GM18951 (cell line): ENCODE measurements at regions of chr19 and their contacts with region 1.

Region 1: DNA sequence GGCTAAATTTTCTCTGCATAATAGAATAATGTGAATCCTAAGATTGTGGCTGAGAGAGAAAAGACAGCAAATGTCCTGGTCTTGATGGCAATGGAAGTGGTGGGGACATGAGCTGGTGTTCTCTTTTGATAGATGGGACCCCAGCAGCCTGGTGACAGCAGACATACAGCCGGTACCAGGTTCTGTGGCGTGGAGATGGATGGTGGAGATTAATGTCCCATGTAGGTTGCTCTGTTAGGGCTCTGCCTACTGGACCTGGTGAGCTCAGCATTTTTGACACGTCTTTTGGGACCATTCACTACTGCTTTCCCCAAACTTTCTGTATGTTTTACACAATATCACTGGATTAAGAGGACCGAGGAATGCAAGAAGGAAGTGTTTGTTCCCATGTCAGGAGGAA is 8.2 kb upstream of the SIGLEC14 start:
- POLR2A ChIP-seq: no peak

Region 2: DNA sequence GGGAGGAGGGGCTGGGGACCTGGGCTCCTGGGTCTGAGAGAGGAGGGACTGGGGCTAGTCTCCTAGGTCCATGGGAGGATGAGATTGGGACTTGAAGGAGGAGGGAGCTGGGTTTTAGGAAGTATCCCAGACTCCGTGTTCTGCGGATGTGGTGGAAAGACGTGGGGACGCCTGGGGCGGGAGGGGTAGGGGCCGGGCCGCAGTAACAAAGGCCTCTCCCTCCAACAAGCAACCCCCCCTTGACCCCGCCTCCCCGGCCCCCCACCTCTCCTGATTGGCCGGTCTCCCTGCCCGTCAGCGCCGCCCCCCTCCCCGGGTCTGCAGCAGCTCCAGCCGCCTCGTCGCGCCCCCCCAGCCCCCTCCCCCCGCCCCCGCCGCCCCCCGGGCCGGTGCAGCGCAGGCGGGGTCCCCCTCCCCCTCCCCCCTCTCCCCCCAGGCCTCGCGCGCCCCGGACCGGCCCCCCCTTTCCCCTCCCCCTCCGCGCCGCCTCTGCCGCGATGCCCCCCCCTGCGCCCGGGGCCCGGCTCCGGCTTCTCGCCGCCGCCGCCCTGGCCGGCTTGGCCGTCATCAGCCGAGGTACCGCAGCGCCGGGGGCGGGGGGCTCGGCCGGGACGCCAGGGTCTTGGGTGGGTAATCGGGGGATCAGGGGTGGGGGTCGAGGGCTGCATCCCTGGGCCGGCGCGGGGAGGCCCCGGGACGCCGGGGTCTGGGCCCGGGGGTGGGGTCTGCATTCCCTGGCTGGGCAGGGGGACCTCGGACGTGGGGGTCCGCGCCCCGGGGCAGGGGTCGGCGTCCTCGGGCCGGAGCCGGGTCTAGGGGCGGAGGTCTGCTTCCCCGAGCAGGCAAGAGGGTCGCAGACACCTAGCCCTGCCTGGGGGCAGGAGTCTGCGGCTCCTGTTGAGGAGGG is 343.2 kb before region 1 on chr19 and contains the start of gene IGLON5:
- in situ Hi-C with region 1: no loop called
- POLR2A ChIP-seq: no peak

Region 3: DNA sequence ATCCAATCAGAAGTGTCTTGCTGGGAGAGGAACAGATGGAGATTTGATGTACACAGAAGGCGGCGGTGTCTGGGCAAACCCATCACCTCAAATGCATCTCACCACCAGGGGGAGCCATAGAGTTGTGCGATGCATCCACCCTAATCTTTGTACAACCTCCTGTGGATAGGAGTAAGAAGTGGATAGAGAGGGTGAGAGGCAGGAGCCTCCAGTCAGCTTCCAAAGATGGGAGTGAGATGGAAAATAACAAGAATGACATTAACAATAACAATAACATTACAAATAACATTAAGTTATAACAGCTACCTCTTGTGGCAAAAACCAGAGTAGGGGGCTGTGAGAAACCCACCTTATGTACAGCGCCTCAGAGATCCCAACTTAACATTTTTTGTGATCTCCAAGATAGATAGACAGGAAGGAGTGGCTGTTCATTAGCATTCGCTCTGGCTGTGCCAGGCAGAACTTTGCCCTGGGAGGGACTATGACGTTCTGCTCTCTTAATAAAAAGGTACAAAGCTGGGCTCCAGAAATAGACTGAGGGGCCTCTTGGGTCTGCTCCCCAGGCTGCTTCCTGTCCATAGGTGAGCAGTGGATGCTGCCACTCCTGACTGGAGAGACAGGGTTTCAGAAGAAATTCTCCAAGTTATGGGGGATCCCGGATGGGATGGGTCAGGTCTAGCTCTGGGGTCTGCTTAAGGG is 181.6 kb before region 1 on chr19:
- in situ Hi-C with region 1: loop called (anchors 5 kb)
- POLR2A ChIP-seq: no peak

Region 4: GRCh38 chr19:51607920-51608562 is 46.7 kb before region 1 on chr19:
- in situ Hi-C with region 1: no loop called
- POLR2A ChIP-seq: no peak